Right cardiac atrium (tissue), 5 donors: ENCODE measurements at regions of chr5 and their contacts with region 1.

Region 1: DNA sequence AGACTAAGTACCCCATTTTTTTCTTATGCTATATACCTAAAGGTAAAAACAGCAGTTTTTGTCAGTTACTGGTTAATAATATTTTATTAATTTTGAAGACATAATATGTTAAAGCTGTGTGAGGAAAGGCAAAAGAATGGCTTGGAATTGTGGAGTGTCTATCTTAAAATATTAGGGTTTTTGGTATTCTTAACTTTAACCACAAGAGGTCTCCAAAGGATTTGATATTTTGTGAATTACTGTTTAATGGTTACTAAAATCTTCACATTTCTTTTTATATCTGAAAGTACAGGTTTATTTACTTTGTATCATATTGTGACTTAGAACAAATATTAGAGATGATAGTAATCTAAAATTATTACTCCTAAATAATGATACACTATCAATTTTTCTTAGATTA is 32.0 kb upstream of the DHFR start:
- DNase-seq: no peak
- ATAC-seq: no peak
- H3K4me3 ChIP-seq: no peak overlapping the region
- H3K27ac ChIP-seq: no peak overlapping the region
- H3K4me1 ChIP-seq: no peaks in the 10 kb centered on the region
- H3K27me3 ChIP-seq: no peaks in the 10 kb centered on the region

Region 2: DNA sequence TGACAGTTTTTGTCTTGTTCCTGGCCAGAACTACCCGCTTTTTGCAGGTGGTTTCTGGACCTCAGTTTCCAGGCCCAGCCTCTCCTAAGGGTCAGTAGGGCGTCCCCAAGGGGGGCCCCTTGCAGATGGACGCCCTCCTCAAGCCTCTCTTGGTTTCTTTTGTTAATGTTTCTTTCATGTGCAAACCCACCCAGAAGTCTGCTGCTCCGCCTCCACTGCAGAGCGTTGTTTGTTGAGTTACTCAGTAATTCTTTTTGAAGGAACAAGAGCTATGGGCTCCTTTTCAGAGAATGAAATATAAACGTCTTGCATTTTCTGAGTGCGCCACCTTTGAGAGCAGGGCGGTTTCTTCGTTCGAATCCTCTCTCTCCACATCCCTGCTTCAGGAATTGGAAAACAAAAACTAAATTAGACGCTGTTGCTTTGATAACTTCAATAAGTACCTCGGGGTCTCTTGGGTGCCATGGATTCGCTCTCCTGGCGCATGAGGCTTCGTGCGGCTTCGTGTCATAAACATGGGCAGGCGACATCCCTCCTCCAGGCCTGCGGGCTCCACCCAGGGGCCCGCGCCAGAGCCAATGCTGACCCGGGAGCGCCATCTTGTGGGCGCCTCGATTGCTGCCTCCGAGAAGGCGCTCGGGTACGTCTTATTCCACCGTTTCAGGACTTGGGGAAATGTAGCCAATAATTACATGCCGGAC is 508.0 kb after region 1 on chr5:
- intact Hi-C with region 1: loop called in 1 of 4 experiments (anchors 10 kb)
- DNase-seq: peak; percentile 85 to 95 (median 94)
- ATAC-seq: peak; percentile 96 to 97
- H3K4me3 ChIP-seq: no peak overlapping the region
- H3K27ac ChIP-seq: no peak overlapping the region
- H3K4me1 ChIP-seq: no peaks in the 10 kb centered on the region
- H3K27me3 ChIP-seq: no peaks in the 10 kb centered on the region

Region 3: DNA sequence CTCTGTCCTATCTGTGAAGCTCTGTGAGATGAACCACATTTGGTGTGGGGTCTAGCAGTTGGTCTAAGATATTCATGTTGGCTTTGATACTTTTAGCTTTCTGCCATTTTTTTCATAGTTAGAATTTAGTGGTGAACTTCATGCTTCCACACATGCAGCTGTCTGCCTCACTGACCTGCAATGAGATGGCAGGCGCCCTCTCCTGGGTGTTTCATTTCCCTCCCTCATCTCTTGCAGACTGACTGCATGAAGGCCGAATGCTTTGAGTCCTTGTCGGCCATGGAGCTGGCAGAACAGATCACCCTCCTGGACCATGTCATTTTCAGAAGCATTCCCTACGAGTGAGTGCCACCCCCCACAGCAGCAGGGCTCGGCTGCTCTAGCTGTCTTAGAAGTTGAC is 520.3 kb after region 1 on chr5:
- intact Hi-C with region 1: no loop called
- DNase-seq: no peak
- ATAC-seq: no peak
- H3K4me3 ChIP-seq: no peak overlapping the region
- H3K27ac ChIP-seq: no peak overlapping the region
- H3K4me1 ChIP-seq: peaks cover 2% of the 10 kb centered on the region
- H3K27me3 ChIP-seq: no peaks in the 10 kb centered on the region